Right ventricle myocardium superior (tissue), 1 donor: ENCODE measurements at regions of chr2 and their contacts with region 1.

Region 1: GRCh38 chr2:40758401-40759155 is 306.7 kb upstream of the SLC8A1 start:
- DNase-seq: no peak
- ATAC-seq: peak; percentile 59

Region 2: GRCh38 chr2:39913648-39914461 is 844.7 kb before region 1 on chr2:
- intact Hi-C with region 1: loop called (anchors 10 kb)
- DNase-seq: no peak
- ATAC-seq: peak; percentile 87

Region 3: GRCh38 chr2:40451918-40452605 is 306.5 kb before region 1 on chr2 and contains the start of gene SLC8A1:
- intact Hi-C with region 1: no loop called
- DNase-seq: peak; percentile 63
- ATAC-seq: peak; percentile 46
- total RNA-seq, gene SLC8A1: 958 TPM

Region 4: GRCh38 chr2:40554668-40555285 is 203.8 kb before region 1 on chr2:
- intact Hi-C with region 1: no loop called
- DNase-seq: peak; percentile 46
- ATAC-seq: peak; percentile 87